ENCODE measurements at regions of chr18 and their contacts with region 1.

Region 1: GRCh38 chr18:47247036-47247832 is 4.2 kb downstream of the SKOR2 start:
- DNase-seq: no peak
- H3K4me3 ChIP-seq: no peak overlapping the region
- H3K27ac ChIP-seq: no peak overlapping the region
- H3K4me1 ChIP-seq: no peaks in the 10 kb centered on the region
- H3K27me3 ChIP-seq: peaks cover 99% of the 10 kb centered on the region
- CTCF ChIP-seq: no peak

Region 2: DNA sequence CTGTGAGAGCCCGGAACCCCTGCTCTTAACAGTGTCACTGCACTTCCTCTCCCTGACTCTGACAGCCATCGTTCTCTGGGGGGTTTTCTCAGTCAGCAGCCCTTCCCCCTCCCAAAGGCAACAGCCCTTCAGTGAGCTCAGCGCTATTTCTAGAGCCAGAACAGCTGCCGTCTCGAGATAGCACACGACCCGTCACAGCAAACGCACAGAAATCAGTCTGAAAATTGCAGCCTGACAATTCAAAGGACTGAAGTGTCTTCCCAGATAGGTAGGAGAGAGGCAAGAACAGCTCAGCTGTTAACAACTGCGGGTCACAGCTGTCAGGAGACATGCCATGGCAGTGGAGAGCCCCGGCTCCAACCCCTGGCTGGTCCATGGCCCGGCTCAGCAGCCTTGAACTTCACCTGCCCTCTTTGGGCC is 535.8 kb before region 1 on chr18:
- CTCF ChIA-PET with region 1: no interaction called
- POLR2A ChIA-PET with region 1: no interaction called
- intact Hi-C with region 1: no loop called
- DNase-seq: no peak
- H3K4me3 ChIP-seq: no peak overlapping the region
- H3K27ac ChIP-seq: no peak overlapping the region
- H3K4me1 ChIP-seq: peaks cover 16% of the 10 kb centered on the region
- H3K27me3 ChIP-seq: no peaks in the 10 kb centered on the region
- CTCF ChIP-seq: no peak

Region 3: GRCh38 chr18:47160256-47160655 is 87.0 kb before region 1 on chr18:
- CTCF ChIA-PET with region 1: no interaction called
- POLR2A ChIA-PET with region 1: no interaction called
- intact Hi-C with region 1: no loop called
- DNase-seq: no peak
- H3K4me3 ChIP-seq: no peak overlapping the region
- H3K27ac ChIP-seq: no peak overlapping the region
- H3K4me1 ChIP-seq: no peaks in the 10 kb centered on the region
- H3K27me3 ChIP-seq: no peaks in the 10 kb centered on the region
- CTCF ChIP-seq: no peak

Region 4: GRCh38 chr18:47235096-47235495 is 12.1 kb before region 1 on chr18:
- CTCF ChIA-PET with region 1: interaction called, 18 read pairs
- POLR2A ChIA-PET with region 1: no interaction called
- intact Hi-C with region 1: no loop called
- DNase-seq: no peak
- H3K4me3 ChIP-seq: no peak overlapping the region
- H3K27ac ChIP-seq: no peak overlapping the region
- H3K4me1 ChIP-seq: no peaks in the 10 kb centered on the region
- H3K27me3 ChIP-seq: peaks cover 89% of the 10 kb centered on the region
- CTCF ChIP-seq: no peak

Region 5: DNA sequence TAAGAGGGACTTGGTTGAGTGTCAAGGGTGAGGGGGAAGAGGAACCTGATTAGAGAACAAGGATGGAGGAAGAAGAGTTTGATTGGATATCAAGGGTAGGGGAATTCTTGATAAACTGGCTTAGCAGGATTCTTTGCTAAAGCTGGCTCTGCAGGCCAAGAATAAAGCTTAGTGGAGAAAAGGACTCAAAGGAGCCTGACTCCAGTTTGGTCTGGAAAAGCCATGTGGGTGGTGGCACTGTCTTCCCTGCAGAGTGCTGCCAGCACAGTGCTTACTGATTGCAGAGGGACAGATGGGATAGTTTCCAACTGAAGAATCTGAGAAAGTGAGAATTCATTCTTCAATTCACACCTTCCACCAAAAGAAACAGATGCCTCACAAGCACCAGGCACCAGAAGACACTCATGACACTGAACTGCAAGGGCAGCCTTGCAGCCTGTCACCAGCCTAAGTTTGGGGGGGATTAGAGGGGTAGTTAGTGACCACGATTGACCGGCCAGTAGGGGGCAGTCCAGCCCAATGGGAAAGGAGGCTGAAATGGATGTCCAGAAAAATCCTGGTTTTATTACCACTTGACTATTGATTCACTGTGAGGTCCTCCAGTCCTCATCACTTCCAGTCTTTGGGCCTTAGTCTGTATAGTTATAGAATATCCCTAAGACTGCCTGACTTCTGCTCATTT is 348.7 kb after region 1 on chr18:
- CTCF ChIA-PET with region 1: no interaction called
- POLR2A ChIA-PET with region 1: no interaction called
- intact Hi-C with region 1: no loop called
- DNase-seq: peak; percentile 31
- H3K4me3 ChIP-seq: no peak overlapping the region
- H3K27ac ChIP-seq: no peak overlapping the region
- H3K4me1 ChIP-seq: no peaks in the 10 kb centered on the region
- H3K27me3 ChIP-seq: peaks cover 77% of the 10 kb centered on the region
- CTCF ChIP-seq: peak; percentile 62

Measured in A673 (cell line).